Right cardiac atrium (tissue), 5 donors: ENCODE measurements at regions of chr10 and their contacts with region 1.

Region 1: DNA sequence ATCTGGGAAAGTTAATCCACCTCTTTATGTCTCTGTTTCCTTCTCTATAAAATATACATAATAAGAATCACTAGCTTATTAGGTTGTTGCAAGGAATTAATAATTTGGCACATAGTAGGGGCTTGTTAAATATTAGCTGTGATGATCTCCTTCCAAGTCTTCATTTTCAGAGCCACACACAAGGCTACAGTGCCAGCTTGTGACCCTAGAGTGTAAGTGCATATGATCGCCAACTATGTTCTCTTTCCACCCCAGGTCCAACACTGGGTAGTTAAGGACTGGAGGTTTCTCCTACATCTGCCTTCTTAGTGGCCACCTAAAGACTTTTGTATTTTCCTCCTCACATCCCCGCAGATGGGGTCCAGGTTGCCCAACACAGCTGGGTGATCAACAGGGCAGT is 17.9 kb upstream of the ACSM6 start:
- DNase-seq: no peak
- ATAC-seq: no peak
- H3K4me3 ChIP-seq: no peak overlapping the region
- H3K27ac ChIP-seq: no peak overlapping the region
- H3K4me1 ChIP-seq: no peaks in the 10 kb centered on the region
- H3K27me3 ChIP-seq: no peaks in the 10 kb centered on the region

Region 2: DNA sequence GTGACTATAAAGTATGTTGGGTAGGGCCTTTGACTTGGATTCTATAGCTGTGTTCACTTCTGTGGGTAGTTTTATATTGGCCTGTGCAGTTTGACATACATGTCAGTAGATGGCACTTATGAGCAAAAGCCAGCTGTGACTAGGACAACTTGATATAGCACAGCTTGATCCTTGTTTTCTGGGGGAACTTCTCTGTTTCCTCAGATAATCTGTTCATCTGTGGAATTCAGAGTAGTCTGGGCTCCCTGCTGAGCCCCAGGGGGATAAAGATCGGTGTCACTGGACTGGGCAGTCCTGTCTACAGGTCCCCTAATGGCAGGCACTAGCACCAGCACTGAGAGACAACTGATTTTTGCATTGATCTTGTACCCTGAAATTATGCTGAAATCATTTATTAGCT is 212.2 kb before region 1 on chr10:
- intact Hi-C with region 1: loop called in 1 of 4 experiments (anchors 10 kb)
- DNase-seq: no peak
- ATAC-seq: peak in 1 of 2 donors; percentile 26
- H3K4me3 ChIP-seq: no peak overlapping the region
- H3K27ac ChIP-seq: no peak overlapping the region
- H3K4me1 ChIP-seq: no peaks in the 10 kb centered on the region
- H3K27me3 ChIP-seq: no peaks in the 10 kb centered on the region

Region 3: DNA sequence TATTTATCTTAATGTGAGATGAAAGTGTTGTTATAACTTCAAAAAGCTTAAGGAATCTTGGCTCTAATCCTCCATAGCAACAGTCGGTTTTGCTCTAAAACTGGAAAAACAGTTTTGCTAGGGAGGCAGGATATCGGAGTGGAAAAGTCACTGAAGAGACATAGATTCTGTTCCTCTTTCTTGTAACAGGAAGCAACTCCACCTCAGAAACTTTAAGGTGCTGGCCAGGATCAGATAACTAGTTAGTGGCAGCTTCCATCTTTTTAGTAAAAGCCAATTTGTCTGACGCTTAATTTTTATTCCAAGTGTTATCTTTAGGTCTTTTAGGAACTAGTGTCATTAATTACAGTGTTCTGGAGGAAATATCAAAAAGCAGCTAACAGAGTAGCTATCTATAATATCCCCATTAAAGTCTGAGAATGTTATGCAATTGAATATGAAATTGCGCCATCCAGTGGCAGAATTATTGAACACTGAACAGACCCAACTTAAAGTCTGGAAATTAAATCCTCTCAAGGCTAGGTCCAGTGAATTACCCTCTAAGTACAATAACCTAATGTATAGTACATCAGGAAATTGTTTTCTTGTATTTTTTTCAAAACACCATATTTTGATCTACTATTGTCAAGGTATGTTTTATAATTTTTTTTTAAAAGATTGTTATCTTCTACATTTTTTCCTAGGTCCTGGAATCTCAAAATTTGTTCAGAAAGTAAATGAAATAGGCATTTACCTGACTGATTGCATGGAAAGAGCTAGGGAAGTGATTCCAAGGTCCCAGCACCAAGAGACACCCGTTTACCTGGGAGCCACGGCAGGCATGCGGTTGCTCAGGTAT is 665.8 kb after region 1 on chr10:
- intact Hi-C with region 1: no loop called
- DNase-seq: no peak
- ATAC-seq: peak; percentile 72 to 89
- H3K4me3 ChIP-seq: no peak overlapping the region
- H3K27ac ChIP-seq: peak overlapping the region; percentile 23
- H3K4me1 ChIP-seq: no peaks in the 10 kb centered on the region
- H3K27me3 ChIP-seq: no peaks in the 10 kb centered on the region